ENCODE measurements at regions of chr16 and their contacts with region 1.

Region 1: DNA sequence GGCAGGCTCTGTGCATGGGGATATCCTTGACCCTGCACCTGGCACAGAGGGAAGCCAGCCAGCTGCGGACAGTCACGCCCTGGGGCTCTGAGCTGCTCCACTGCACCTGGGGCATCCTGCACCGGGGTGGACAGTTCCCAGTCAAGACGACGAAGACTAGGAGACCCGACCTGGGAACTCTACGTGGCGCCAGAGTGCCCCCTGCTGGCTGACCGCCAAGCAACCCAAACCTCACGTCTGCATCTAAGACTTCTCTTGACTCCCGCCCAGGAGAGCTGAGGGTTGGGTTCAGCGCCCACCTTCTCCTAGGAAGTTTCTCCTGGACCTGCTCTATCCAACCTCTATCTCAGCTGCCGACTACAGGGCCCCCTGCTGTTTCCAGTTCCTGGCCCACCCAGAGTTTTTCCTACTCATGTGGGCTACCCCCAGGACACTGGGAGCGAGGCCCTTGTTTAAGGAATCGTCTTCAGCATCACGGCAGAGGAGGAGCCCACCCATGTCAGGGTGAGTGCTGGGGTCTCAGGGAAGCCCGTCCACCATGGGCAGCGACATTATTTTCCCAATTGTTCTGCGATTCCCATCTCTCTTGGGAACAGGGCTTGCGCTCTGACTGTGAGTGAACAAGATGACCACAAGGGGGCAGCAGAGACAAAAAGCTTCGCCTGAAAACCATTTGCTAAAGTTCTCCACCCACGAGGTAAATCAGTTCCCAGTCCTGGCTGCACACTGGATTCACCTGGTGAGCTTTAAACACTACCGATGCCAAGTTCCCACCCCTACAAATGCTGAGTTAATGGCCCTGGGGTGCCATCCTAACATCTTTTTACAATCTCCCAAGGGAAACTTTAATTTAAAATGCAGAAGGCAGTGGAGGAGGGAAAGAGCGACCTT is 29.3 kb downstream of the TLE7 start:
- DNase-seq: peak; percentile 87
- ATAC-seq: peak; percentile 90
- H3K4me3 Mint-ChIP-seq: peak overlapping the region; percentile 70
- H3K27ac Mint-ChIP-seq: no peak overlapping the region
- H3K4me1 Mint-ChIP-seq: peaks cover 8% of the 10 kb centered on the region
- H3K27me3 Mint-ChIP-seq: peaks cover 7% of the 10 kb centered on the region
- CTCF ChIP-seq: peak; percentile 87

Region 2: DNA sequence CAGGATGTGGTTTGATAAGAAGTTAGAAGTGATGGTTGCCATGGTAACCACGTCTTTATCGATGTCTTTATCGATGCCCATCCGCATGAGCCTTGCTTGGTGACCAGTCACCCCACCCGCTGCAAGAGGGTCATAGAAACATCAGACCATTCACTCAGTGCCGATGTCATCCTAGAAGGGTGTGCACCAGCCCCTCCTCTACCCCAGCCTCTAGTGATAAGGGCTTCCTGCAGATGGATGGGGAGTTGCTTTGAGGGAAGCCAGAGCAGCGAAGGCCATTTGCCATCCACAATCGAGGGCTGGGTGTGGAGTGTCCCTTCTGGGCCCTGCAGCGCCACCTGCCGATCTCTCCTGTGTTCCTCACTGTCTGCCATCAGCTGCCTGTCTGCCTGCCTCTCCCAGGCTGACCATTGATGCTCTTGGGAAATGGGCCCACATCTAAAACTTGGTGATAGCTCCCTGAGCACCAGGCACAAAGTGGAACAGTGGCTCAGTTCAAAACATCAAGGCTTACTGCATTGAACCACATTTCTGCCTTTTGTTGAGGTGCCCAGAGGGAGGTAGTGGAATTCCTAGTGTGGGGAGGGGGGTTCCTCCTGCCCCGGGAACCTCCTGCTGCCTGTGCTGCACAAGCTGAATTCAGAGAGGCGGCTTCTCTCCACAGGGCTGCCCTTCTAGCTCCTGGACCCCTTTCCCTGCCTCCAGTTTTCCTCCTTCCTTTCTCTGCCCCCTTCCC is 45.1 kb before region 1 on chr16:
- CTCF ChIA-PET with region 1: interaction called, 29 read pairs
- POLR2A ChIA-PET with region 1: no interaction called
- DNase-seq: peak; percentile 92
- ATAC-seq: peak; percentile 99
- H3K4me3 Mint-ChIP-seq: no peak overlapping the region
- H3K27ac Mint-ChIP-seq: no peak overlapping the region
- H3K4me1 Mint-ChIP-seq: no peaks in the 10 kb centered on the region
- H3K27me3 Mint-ChIP-seq: peaks cover 4% of the 10 kb centered on the region; the same call in 1 of the 2 replicates
- CTCF ChIP-seq: peak; percentile 80

Region 3: GRCh38 chr16:71383054-71383773 is 29.3 kb before region 1 on chr16:
- CTCF ChIA-PET with region 1: interaction called, 75 read pairs
- POLR2A ChIA-PET with region 1: interaction called, 8 read pairs
- DNase-seq: no peak
- ATAC-seq: peak; percentile 25
- H3K4me3 Mint-ChIP-seq: no peak overlapping the region
- H3K27ac Mint-ChIP-seq: 0 out of 2 replicates have a peak overlapping the region, but pooled peaks have one; percentile 0
- H3K4me1 Mint-ChIP-seq: peaks cover 54% of the 10 kb centered on the region
- H3K27me3 Mint-ChIP-seq: no peaks in the 10 kb centered on the region; the same call in 1 of the 2 replicates
- CTCF ChIP-seq: no peak

Region 4: DNA sequence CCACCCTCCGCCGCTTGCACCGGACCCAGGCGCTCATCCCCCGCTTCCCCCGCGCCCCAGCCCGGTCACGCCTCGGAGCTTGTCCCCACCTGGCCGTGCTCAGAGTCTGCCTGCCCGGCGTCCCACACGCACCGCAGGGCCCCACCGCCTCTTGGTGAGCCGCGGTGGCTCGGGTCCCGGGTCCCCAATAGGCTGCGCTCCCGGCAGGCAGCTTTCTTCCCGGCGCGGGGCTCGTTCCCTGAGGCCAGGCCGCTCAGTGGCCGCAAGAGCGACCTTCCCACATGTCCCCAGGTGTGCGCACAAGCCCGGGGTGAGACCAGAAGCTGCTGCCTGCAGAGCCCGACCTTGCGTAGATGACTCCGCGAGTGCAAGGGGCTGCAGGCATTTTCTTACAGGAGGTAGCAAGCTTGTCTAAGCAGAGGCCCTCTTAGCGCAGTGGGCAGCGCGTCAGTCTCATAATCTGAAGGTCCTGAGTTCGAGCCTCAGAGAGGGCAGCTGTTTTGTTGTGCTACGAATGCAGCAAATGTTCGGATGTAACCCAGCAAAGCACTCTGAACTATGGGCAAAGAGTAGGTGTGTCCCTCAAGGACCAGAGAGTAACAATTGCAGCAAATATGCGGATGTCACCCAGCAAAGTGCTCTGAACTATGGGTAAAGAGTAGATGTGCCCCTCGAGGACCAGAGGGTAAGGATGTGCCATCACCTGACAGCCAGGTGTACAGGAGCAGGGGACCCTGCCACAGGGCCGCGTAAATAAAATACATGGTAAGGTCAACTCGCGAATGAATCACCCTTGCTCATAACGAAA is 13.8 kb after region 1 on chr16:
- CTCF ChIA-PET with region 1: interaction called, 76 read pairs
- POLR2A ChIA-PET with region 1: interaction called, 3 read pairs
- DNase-seq: peak; percentile 94
- ATAC-seq: peak; percentile 96
- H3K4me3 Mint-ChIP-seq: peak overlapping the region; percentile 82
- H3K27ac Mint-ChIP-seq: peak overlapping the region; percentile 95
- H3K4me1 Mint-ChIP-seq: peaks cover 16% of the 10 kb centered on the region
- H3K27me3 Mint-ChIP-seq: peaks cover 53% of the 10 kb centered on the region
- CTCF ChIP-seq: no peak

Region 5: DNA sequence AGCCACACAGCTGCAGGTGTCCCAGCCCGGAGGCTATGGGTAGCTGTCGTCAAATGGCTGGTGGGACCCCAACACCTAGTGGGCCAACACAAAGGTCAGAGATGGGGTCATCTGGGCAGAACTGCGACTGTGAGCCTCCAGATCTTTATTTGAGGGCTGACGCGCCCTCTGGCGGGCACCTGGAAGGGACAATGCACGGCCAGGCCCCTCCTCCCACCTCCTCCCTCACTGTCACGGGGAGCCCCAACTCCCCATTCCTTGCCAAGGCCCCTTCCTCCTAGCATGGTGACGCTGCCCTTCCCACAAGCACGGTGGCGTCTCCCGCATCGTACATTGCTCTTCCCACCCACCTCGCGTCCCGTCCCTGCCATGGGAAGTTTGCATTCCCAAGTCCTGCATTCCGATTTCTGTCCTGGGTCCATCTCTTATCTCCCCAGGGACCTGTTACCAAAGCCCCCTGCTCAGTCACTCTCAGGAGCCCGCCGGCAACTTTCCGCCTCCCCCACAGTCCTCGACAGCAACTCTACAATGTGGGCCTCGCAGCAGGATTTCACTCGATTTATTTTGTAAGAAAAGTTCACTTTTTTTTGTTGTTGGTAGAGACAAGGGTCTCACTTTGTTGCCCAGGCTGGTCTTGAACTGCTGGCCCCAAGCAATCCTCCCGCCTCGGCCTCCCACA is 28.3 kb after region 1 on chr16:
- CTCF ChIA-PET with region 1: interaction called, 12 read pairs
- POLR2A ChIA-PET with region 1: no interaction called
- DNase-seq: peak; percentile 77
- ATAC-seq: peak; percentile 72
- H3K4me3 Mint-ChIP-seq: no peak overlapping the region; the same call in 1 of the 2 replicates
- H3K27ac Mint-ChIP-seq: no peak overlapping the region
- H3K4me1 Mint-ChIP-seq: peaks cover 7% of the 10 kb centered on the region; the same call in 1 of the 2 replicates
- H3K27me3 Mint-ChIP-seq: peaks cover 15% of the 10 kb centered on the region
- CTCF ChIP-seq: peak; percentile 57

Measured in WTC11 (cell line).